ENCODE measurements at regions of chr5 and their contacts with region 1.

Region 1: DNA sequence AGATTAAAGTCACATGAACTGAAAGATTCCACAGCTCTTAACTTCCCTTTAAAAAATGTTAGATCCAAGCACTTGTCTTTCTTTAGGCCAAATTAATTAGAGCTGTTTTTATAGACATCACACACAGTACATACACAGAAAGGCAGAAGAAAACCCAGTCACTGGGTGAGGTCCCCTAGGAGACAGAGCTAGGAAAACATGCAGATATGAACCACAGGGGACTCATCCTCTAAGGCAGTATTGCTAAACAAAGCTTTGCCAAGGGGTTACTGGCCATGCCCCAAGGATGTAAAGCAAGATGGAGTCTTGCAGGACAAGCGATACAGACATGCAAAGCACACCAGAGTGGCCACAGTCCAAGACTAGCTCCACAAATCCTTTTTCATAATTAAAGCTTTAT is 227.0 kb downstream of the SEMA6A start:
- DNase-seq: no peak

Region 2: DNA sequence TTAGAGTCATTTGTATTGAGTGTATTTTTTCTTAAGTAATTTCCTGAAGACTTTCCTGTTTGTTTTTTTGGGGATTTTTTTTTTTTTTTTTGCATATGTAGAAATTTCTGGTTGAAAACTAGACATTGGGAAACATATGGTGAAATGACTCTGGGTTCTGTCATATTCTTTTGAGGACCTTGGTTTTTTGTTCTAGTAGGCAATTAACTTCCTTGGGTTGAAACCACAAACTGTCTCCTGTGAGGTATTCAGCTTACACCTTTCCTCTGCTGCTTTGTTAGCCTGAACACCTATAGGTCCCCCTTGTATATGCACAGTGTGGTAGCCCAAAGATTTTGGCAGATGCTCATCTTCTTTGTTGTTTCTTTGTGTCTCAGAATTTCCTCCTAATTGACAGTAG is 122.4 kb before region 1 on chr5:
- in situ Hi-C with region 1: no loop called
- DNase-seq: no peak

Region 3: DNA sequence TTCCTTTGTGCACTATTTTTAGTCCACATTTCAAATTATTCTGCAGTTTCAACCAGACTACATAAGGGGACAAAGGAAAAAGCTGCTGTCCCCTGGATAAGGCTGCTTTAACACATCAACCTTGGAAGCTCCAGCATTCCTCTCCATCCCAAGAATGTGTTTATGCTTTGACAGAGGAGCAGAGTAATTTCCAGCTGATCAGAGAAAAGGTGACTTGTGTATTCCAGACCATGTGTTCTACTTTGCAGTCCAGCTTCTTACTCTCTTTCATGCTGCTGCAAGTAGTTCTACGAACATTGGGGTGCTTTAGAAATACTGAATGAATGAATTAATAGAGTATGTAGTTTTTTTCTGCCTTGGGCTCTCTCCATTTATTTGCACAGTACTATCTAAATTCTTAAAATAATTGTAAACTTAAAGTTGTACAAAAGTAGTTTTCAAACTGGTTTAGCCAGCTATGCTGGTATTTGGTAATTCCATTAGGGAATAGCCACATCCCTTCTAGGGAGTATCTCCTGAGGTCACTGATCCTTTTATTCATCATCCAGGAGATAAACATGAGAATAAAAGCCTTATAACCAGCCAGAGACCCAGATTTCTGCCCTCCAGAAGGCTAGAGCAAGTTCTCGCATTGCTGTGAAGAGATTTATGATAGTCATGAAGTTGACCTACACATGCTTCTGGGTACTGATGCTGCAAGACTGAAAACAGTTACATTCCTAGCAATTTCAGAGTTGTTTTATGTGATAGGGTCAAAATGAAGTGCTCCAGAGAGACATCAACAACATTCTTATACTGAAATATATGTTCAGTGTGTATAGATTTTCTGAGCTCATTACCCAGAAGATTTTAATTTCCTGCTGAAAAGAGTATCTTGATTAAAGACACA is 47.7 kb before region 1 on chr5:
- in situ Hi-C with region 1: loop called (anchors 5 kb)
- DNase-seq: no peak

Region 4: GRCh38 chr5:116442095-116442534 is 94.5 kb after region 1 on chr5:
- in situ Hi-C with region 1: no loop called
- DNase-seq: no peak

Region 5: GRCh38 chr5:116632890-116633289 is 285.2 kb after region 1 on chr5:
- in situ Hi-C with region 1: no loop called
- DNase-seq: no peak